GM10248 (cell line): ENCODE measurements at regions of chr5 and their contacts with region 1.

Region 1: GRCh38 chr5:141590127-141590526 is 28.7 kb downstream of the DIAPH1 start:
- DNase-seq: no peak
- CTCF ChIP-seq: no peak

Region 2: GRCh38 chr5:141605523-141606277 is 15.6 kb after region 1 on chr5:
- CTCF ChIA-PET with region 1: interaction called, 177 read pairs
- POLR2A ChIA-PET with region 1: no interaction called
- DNase-seq: peak; percentile 59
- CTCF ChIP-seq: no peak

Region 3: GRCh38 chr5:141636413-141637122 is 46.4 kb after region 1 on chr5 and contains the starts of genes HDAC3 and RELL2:
- CTCF ChIA-PET with region 1: interaction called, 103 read pairs
- POLR2A ChIA-PET with region 1: interaction called, 5 read pairs
- DNase-seq: peak; percentile 95
- CTCF ChIP-seq: no peak

Region 4: GRCh38 chr5:141681695-141682641 is 91.8 kb after region 1 on chr5 and contains the start of gene ARAP3:
- CTCF ChIA-PET with region 1: no interaction called
- POLR2A ChIA-PET with region 1: no interaction called
- DNase-seq: no peak
- CTCF ChIP-seq: no peak

Region 5: DNA sequence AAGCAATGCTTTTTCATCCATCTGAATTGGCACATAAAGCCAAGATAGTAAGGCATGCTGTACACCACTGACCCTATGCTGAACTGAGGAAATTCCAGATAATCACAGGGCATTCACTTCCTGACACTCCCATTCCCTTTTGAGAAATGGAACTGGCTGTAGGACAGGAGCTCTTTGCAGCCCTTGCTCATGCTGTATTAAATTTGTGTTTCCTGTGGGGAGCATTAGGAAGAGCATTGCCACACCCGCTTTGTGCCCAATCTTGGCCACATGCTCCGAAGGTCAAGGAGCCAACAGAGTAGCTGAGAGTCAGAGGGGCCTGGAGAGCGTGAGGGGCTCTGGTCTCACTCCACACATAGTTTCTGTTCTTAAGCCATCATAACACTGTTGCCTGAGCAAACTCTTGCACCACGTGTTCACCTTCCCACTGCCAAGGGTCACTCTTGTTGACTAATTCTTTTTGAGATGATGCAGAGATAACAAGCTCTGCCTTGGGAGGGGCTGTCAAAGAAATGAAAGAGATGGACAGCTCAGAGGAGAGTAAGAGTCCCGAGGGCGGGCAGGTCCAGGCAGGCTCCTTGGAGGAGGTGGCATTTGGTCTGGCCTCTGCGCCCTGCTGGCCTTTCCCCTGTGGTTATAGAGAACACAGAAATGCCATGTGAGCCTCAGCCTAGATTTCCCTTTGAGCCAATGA is 123.6 kb after region 1 on chr5:
- CTCF ChIA-PET with region 1: no interaction called
- POLR2A ChIA-PET with region 1: no interaction called
- DNase-seq: no peak
- CTCF ChIP-seq: no peak